B cell (primary cell): ENCODE measurements at regions of chr19 and their contacts with region 1.

Region 1: DNA sequence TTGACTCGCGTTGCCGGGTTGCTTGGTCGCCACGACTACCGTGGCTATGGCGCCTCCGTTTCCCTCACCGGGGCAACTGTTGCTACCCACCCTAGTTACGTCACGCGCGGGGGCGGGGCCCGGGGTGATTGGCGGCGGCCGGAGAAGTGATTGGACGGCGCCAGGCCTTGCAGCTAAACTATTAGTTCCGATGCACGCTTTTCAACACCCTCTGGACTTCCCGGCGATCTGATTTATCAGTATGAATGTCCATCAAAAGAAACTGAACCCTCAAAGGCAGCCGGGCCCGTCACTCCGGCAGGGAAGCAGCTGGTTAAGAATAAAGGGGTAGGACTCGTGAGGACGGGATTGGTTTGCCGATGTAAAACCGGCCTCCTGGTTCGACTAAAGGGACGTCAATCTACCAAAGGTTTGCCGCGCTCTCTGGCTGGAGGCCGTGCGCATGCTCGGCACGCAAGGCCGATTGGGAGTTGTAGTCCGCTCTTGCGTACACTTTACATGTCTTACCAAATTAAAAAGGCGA is at the start of gene RFX1:
- DNase-seq: peak; percentile 99
- ATAC-seq: peak; percentile 70
- H3K4me3 ChIP-seq: peak within 1 kb of the TSS; percentile 74 to 96 (median 82)
- H3K4me3 Mint-ChIP-seq: peak within 1 kb of the TSS; percentile 90
- H3K27ac ChIP-seq: peak within 1 kb of the TSS; percentile 99 to 100
- H3K27ac Mint-ChIP-seq: peak within 1 kb of the TSS; percentile 97
- H3K4me1 ChIP-seq: peaks cover 42 to 48% of the 10 kb centered on the region in 2 donors
- H3K4me1 Mint-ChIP-seq: peaks cover 46% of the 10 kb centered on the region
- H3K27me3 ChIP-seq: no peaks in the 10 kb centered on the region
- H3K27me3 Mint-ChIP-seq: no peaks in the 10 kb centered on the region
- CTCF ChIP-seq: no peak
- total RNA-seq, gene RFX1: 33.3 and 33.9 TPM in 2 replicates

Region 2: GRCh38 chr19:13794757-13795589 is 211.3 kb before region 1 on chr19 and contains the start of gene ZSWIM4:
- CTCF ChIA-PET with region 1: no interaction called
- POLR2A ChIA-PET with region 1: no interaction called
- intact Hi-C with region 1: loop called (anchors 1 kb)
- DNase-seq: peak; percentile 97
- ATAC-seq: peak; percentile 95
- H3K4me3 ChIP-seq: peak within 1 kb of the TSS; percentile 44 to 81 (median 68)
- H3K4me3 Mint-ChIP-seq: peak within 1 kb of the TSS; percentile 98
- H3K27ac ChIP-seq: peak within 1 kb of the TSS; percentile 58 to 82
- H3K27ac Mint-ChIP-seq: peak within 1 kb of the TSS; percentile 95
- H3K4me1 ChIP-seq: peaks cover 21 to 26% of the 10 kb centered on the region in 2 donors
- H3K4me1 Mint-ChIP-seq: peaks cover 36% of the 10 kb centered on the region
- H3K27me3 ChIP-seq: no peaks in the 10 kb centered on the region
- H3K27me3 Mint-ChIP-seq: no peaks in the 10 kb centered on the region
- CTCF ChIP-seq: no peak
- total RNA-seq, gene ZSWIM4: 10.1 and 10.6 TPM in 2 replicates

Region 3: GRCh38 chr19:13952154-13953035 is 53.9 kb before region 1 on chr19 and contains the start of gene DCAF15:
- CTCF ChIA-PET with region 1: interaction called, 8 read pairs
- POLR2A ChIA-PET with region 1: interaction called, 6 read pairs
- intact Hi-C with region 1: loop called (anchors 1 kb)
- DNase-seq: peak; percentile 100
- ATAC-seq: peak; percentile 95
- H3K4me3 ChIP-seq: peak within 1 kb of the TSS; percentile 55 to 98 (median 76)
- H3K4me3 Mint-ChIP-seq: peak within 1 kb of the TSS; percentile 96
- H3K27ac ChIP-seq: peak within 1 kb of the TSS; percentile 34 to 85
- H3K27ac Mint-ChIP-seq: peak within 1 kb of the TSS; percentile 96
- H3K4me1 ChIP-seq: peaks cover 15 to 18% of the 10 kb centered on the region in 2 donors
- H3K4me1 Mint-ChIP-seq: peaks cover 21% of the 10 kb centered on the region
- H3K27me3 ChIP-seq: no peaks in the 10 kb centered on the region
- H3K27me3 Mint-ChIP-seq: no peaks in the 10 kb centered on the region
- CTCF ChIP-seq: no peak
- total RNA-seq, gene DCAF15: 115 and 116 TPM in 2 replicates

Region 4: DNA sequence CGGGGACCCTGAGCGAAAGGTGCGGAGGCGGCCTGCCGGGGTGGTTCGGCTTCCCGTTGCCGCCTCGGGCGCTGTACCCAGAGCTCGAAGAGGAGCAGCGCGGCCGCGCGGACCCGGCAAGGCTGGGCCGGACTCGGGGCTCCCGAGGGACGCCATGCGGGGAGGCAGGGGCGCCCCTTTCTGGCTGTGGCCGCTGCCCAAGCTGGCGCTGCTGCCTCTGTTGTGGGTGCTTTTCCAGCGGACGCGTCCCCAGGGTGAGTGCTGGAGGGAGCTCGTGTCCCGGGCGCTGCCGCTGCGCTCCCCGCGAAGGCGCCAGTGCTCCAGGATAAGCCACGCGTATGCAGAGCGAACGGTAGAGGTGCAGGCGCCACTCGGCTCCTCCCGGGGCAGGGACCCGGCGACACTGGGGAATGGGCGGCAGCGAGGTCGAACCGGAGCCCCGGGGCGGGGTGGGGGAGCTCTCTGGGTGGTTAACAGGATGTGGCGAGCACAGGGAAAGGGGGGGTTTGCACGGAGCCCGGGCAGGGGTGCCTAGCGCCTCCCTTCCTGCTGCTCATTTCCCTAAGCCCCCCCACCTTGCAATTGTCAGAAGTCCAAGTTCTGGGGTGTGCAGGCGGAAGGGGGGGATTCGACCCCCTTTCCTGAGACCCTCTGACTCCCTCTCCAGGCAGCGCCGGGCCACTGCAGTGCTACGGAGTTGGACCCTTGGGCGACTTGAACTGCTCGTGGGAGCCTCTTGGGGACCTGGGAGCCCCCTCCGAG is 25.6 kb after region 1 on chr19 and contains the start of gene IL27RA:
- CTCF ChIA-PET with region 1: interaction called, 12 read pairs
- POLR2A ChIA-PET with region 1: interaction called, 24 read pairs
- intact Hi-C with region 1: loop called (anchors 1 kb)
- DNase-seq: peak; percentile 84
- ATAC-seq: peak; percentile 72
- H3K4me3 ChIP-seq: peak within 1 kb of the TSS; percentile 26 to 95 (median 83)
- H3K4me3 Mint-ChIP-seq: peak within 1 kb of the TSS; percentile 94
- H3K27ac ChIP-seq: peak within 1 kb of the TSS; percentile 83 to 94
- H3K27ac Mint-ChIP-seq: peak within 1 kb of the TSS; percentile 94
- H3K4me1 ChIP-seq: peaks cover 22 to 42% of the 10 kb centered on the region in 2 donors
- H3K4me1 Mint-ChIP-seq: peaks cover 38% of the 10 kb centered on the region
- H3K27me3 ChIP-seq: no peaks in the 10 kb centered on the region
- H3K27me3 Mint-ChIP-seq: no peaks in the 10 kb centered on the region
- CTCF ChIP-seq: peak; percentile 68
- total RNA-seq, gene IL27RA: 38.2 and 38.6 TPM in 2 replicates

Region 5: DNA sequence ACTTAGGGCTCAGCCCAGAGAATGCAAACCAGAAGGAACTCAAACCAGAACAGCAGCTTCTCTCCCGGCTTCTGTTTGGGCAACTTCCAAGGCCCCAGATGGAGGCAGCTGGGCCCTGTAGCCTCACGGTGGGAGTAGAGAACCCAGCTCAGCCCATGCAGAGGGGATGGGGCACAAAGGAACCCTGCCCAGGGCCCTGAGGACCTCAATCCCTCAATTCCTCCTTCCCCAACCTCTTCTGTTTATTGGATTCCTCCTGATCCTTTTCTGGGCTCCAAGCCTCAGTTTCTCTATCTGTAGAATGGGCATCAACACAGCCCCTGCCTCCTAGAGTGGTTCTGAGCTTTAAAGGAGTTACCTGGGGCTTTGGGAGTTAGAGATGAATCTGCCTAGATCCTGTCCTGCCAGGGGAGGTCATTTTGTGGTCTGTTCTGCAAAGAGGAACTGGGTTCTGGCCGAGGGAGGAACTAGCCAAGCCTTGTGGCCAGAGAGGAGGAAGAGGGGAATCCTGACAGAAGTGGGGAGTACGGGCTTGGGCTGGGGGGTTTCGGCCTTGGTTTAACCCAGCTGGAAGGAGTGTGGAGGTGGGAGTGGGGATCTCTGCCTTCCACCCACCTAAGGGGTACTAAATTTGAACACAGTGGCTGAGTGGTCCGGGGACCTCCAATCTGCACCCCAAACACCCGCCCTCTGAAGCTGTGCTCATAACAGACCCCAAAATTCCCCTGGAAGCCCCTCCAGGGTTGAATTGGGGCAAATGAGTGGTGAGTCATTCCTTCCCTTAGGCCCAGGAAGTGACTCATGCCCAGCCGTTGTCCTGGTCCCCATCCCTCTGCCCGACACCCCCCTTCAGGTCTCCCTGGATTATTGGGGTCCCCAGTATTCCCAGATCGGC is 377.6 kb after region 1 on chr19:
- CTCF ChIA-PET with region 1: no interaction called
- POLR2A ChIA-PET with region 1: no interaction called
- intact Hi-C with region 1: loop called (anchors 5 kb)
- DNase-seq: peak; percentile 68
- ATAC-seq: peak; percentile 12
- H3K4me3 ChIP-seq: peak overlapping the region; percentile 19 to 90 (median 39)
- H3K4me3 Mint-ChIP-seq: peak overlapping the region; percentile 85
- H3K27ac ChIP-seq: peak overlapping the region; percentile 97 to 99
- H3K27ac Mint-ChIP-seq: peak overlapping the region; percentile 89
- H3K4me1 ChIP-seq: peaks cover 48 to 70% of the 10 kb centered on the region in 2 donors
- H3K4me1 Mint-ChIP-seq: peaks cover 51% of the 10 kb centered on the region
- H3K27me3 ChIP-seq: no peaks in the 10 kb centered on the region
- H3K27me3 Mint-ChIP-seq: no peaks in the 10 kb centered on the region
- CTCF ChIP-seq: no peak